Heart right ventricle (tissue), 16 donors: ENCODE measurements at regions of chr7 and their contacts with region 1.

Region 1: DNA sequence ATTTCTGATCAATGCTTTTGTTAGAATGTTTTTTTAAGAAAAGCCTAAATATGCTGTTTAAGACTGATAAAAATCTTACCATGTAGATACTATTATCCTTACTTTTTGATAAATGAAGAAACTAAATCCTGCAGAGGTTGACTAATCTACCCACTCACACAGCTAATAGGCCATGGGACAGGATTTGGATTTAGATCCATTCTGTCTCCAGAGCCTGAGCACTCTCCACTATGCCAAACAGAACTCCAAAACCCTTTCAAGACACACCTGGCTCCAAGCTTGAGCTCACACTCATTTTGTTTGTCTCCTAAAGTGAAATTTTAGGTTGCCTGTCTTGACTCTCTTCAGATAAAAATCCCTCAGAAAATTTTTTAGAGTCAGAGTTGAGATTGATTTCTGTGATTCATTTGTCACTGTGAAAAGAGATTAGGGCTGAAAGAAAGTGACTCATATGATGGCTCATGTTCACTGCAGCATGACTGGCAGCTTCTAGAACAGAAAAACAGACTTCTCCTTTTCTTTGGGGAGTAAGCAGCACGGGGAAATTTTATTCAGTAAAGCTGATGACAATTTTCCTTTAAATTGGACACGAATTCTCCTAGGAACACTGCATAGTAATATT is 132.3 kb upstream of the POT1 start:
- DNase-seq: no peak
- ATAC-seq: no peak
- H3K4me3 ChIP-seq: no peak overlapping the region
- H3K27ac ChIP-seq: no peak overlapping the region
- H3K4me1 ChIP-seq: no peaks in the 10 kb centered on the region
- H3K27me3 ChIP-seq: peaks cover 0 to 7% (median 0%) of the 10 kb centered on the region in 7 donors
- CTCF ChIP-seq: no peak

Region 2: DNA sequence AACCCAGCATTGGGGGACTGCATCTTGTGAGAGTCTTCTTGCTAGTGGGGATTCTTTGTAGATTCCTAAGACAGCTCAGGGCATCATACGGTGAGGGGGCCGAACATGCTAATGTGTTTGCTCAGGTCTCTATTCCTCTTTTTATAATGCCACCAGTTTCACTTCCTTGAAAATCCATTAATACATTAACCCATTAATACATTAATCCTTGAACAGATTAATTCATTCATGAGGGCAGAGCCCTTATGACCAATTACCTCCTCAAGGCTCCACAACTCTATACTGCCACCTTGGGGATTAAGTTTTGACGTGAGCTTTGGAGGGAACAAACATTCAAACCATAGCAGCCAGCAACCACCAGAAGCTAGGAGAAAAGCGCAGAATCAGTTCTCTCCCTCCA is 65.1 kb before region 1 on chr7:
- intact Hi-C with region 1: no loop called
- DNase-seq: no peak
- ATAC-seq: no peak
- H3K4me3 ChIP-seq: no peak overlapping the region
- H3K27ac ChIP-seq: no peak overlapping the region
- H3K4me1 ChIP-seq: peaks cover 0 to 4% (median 0%) of the 10 kb centered on the region in 9 donors
- H3K27me3 ChIP-seq: no peaks in the 10 kb centered on the region
- CTCF ChIP-seq: peak in 4 of 9 donors; percentile 28 to 32 (median 30)

Region 3: DNA sequence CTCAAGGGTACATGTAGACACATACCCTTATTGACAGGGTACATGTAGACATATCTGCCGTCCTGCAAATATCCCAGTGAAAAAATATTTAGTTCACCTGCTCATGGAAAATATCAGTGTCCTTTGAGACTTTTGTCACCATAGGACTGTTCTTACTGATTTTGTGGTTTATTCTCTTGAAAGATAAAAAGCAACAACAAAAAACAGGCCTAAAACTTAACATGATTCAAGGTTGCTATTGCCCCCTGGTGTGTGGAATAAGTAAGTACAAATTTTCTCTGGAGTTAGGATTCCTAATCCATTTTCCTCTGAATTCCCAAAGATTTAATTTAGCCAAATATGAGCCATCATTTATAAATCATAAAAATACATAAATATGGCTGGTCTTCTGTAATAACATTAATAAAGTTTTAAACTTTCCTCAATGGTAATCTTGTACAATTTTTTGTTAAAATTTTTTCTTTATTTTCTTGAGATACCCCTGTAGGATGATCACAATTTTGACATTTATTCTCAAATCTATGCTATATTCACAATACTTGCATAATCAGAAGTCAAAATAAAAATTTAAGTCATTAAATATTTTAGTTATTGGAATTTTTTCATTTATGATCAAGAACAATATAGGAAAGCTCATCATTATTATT is 609.2 kb after region 1 on chr7:
- intact Hi-C with region 1: loop called in 6 of 10 experiments (anchors 5 to 10 kb)
- DNase-seq: no peak
- ATAC-seq: no peak
- H3K4me3 ChIP-seq: no peak overlapping the region
- H3K27ac ChIP-seq: no peak overlapping the region
- H3K4me1 ChIP-seq: no peaks in the 10 kb centered on the region
- H3K27me3 ChIP-seq: no peaks in the 10 kb centered on the region
- CTCF ChIP-seq: peak in 8 of 9 donors; percentile 5 to 58 (median 49)